Activated naive CD4-positive, alpha-beta T cell treated with anti-CD3 and anti-CD28 coated beads for 36 hours (primary cell): ENCODE measurements at regions of chr3 and their contacts with region 1.

Region 1: GRCh38 chr3:101849051-101849720 is at the start of gene NFKBIZ:
- DNase-seq: peak; percentile 97
- H3K4me3 Mint-ChIP-seq: peak within 1 kb of the TSS; percentile 98
- H3K27ac Mint-ChIP-seq: peak within 1 kb of the TSS; percentile 100
- H3K4me1 Mint-ChIP-seq: peaks cover 39% of the 10 kb centered on the region
- H3K27me3 Mint-ChIP-seq: no peaks in the 10 kb centered on the region
- total RNA-seq, gene NFKBIZ: 79.3 to 85.0 TPM

Region 2: GRCh38 chr3:101685870-101686412 is 163.2 kb before region 1 on chr3:
- CTCF ChIA-PET with region 1: no interaction called
- intact Hi-C with region 1: loop called (anchors 1 kb)
- DNase-seq: no peak
- H3K4me3 Mint-ChIP-seq: peak overlapping the region; percentile 98
- H3K27ac Mint-ChIP-seq: peak overlapping the region; percentile 99
- H3K4me1 Mint-ChIP-seq: peaks cover 54% of the 10 kb centered on the region
- H3K27me3 Mint-ChIP-seq: no peaks in the 10 kb centered on the region

Region 3: DNA sequence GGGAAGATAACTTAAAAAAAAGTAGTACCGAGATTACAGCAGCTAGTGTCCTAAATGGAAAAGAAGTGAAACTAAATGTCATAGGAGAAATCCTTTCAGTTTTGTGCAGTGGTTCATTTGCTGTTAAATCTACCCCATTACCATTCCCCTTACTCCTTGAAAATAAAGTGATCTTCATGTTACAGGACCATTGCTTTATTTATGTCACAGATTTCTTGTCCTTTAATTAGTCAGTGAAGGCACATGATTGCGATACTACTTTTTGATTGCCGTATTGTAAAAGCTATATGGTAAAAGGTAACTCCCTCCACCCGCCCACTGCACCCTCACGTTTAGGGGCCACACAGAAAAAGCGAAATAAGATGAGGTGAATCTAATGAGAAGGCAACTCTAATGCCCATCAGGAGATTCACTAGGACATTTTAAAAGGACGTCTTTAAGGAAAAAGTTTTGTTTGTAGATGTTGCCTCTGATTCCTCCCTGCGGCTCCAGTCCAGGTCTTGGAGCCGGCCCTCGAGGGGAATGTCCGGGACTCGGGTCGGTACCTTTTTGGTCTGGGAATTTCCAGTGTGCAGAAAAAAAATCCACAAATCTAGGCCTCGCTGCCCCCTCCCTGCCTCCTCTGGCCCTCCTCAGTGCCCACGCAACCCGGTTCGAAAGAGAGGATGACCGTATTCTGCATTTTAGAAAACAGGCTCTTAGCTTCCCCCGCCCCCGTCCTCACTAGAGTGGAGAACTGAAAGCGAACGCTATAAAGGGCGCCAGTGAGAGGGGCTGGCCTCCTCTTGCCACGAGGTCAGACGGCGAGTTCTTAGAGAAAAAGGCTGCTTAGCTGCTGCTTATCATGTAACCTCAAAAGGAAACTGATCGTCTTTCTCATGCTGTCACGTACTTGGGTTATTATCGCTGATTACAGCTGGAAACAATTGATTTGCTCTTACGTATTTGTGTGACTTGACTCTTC is 21.7 kb before region 1 on chr3:
- CTCF ChIA-PET with region 1: interaction called, 7 read pairs
- intact Hi-C with region 1: loop called (anchors 1 kb)
- DNase-seq: peak; percentile 94
- H3K4me3 Mint-ChIP-seq: peak overlapping the region; percentile 77
- H3K27ac Mint-ChIP-seq: peak overlapping the region; percentile 94
- H3K4me1 Mint-ChIP-seq: peaks cover 60% of the 10 kb centered on the region
- H3K27me3 Mint-ChIP-seq: no peaks in the 10 kb centered on the region

Region 4: DNA sequence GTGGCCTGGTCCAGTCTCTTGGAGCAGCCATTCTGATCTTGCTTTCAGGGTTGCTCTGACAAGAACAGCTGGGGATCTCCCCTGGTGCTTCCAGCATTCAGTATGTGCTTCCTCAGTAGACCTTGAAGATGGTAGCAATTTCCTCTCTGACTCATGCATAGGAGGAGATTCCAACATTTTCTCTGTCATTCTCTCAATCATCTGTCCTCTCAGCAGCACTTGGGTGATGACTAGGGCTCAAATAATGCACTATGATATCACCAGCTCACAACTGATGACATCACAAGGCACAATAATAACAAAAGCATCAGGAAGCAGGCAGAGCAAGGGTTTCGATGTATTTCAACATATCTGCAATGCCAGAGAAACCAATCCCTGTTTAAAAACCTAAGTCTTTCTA is 52.9 kb after region 1 on chr3:
- CTCF ChIA-PET with region 1: no interaction called
- intact Hi-C with region 1: loop called (anchors 1 kb)
- DNase-seq: peak; percentile 69
- H3K4me3 Mint-ChIP-seq: no peak overlapping the region
- H3K27ac Mint-ChIP-seq: no peak overlapping the region
- H3K4me1 Mint-ChIP-seq: peaks cover 17% of the 10 kb centered on the region
- H3K27me3 Mint-ChIP-seq: no peaks in the 10 kb centered on the region

Region 5: GRCh38 chr3:101988591-101988990 is 139.4 kb after region 1 on chr3:
- CTCF ChIA-PET with region 1: no interaction called
- intact Hi-C with region 1: loop called (anchors 1 kb)
- DNase-seq: peak; percentile 31
- H3K4me3 Mint-ChIP-seq: no peak overlapping the region
- H3K27ac Mint-ChIP-seq: no peak overlapping the region
- H3K4me1 Mint-ChIP-seq: peaks cover 21% of the 10 kb centered on the region
- H3K27me3 Mint-ChIP-seq: no peaks in the 10 kb centered on the region

Region 6: DNA sequence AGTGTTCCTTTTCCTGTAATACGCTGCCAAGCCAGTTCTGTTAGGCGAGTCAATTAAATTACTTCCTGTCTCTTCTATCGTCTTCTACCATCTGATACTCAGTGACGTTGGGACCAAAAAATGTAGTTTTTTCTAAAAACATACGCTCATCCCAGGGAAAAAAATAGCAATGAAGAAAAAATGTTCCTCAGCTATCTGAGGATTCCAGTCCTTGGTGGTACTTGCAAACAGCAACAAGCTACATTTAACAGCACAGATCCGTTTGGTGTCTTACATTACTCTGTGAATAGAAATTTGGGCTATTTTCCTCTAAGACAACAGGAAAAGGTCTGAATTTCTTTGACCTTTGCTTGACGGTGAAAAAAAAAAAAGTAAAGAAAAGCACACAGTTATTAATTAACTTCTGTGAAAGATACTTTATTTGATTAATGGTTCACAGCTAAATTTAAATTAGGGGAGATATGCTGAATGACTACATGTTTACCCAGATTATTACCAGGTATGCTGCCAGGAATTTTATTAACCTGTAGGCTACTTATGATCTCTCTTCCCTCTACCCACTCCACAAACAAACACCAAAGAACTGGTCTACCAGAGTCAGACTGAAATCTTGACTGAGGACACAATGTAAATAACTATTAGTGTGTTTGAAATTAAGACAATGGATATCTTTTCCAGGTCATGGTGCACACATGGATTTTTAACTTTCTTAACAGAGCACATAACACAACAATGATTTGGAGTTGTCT is 331.3 kb after region 1 on chr3:
- CTCF ChIA-PET with region 1: no interaction called
- intact Hi-C with region 1: no loop called
- DNase-seq: no peak
- H3K4me3 Mint-ChIP-seq: no peak overlapping the region
- H3K27ac Mint-ChIP-seq: no peak overlapping the region
- H3K4me1 Mint-ChIP-seq: peaks cover 6% of the 10 kb centered on the region
- H3K27me3 Mint-ChIP-seq: no peaks in the 10 kb centered on the region

Region 7: DNA sequence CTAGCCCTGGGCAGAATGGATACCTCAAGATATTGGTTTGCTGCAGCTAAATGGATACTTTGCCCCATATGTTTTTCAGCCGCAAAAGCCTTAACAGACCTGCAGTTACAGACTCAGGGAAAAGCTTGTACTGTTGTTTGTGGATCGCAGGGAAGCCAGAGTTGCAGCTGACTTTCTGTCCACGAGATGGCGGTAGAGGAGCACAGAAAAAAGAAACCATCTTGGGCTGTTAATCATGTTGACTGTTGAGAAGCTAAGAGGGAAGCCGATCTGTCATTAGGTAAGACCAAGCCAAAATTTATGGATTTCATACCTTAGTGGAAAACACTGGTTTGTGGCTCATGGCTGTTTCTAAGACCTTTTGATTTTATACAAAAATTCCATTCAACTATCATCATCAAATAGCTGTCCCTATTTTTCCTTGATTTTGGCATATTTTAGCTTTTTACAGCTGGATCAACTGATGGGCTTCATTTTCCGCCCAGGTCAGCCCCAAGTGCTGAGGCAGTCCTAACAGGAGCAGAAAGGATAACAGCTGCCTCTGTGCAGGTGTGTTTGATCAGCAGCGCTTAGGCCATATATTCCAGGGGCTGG is 380.0 kb after region 1 on chr3:
- CTCF ChIA-PET with region 1: interaction called, 14 read pairs
- intact Hi-C with region 1: loop called (anchors 1 kb)
- DNase-seq: peak; percentile 88
- H3K4me3 Mint-ChIP-seq: no peak overlapping the region
- H3K27ac Mint-ChIP-seq: no peak overlapping the region
- H3K4me1 Mint-ChIP-seq: peaks cover 16% of the 10 kb centered on the region
- H3K27me3 Mint-ChIP-seq: no peaks in the 10 kb centered on the region